Activated T-helper 2 cell treated with anti-CD3 and anti-CD28 coated beads, Interferon-gamma antibody, Interleukin-2, Interleukin-4, amounts not matched to agents 10 μg/mL and 5 μg/mL and 100 μg/mL, durations not matched to agents 14 hours and 24 hours and 36 hours (primary cell): ENCODE measurements at regions of chr10 and their contacts with region 1.

Region 1: DNA sequence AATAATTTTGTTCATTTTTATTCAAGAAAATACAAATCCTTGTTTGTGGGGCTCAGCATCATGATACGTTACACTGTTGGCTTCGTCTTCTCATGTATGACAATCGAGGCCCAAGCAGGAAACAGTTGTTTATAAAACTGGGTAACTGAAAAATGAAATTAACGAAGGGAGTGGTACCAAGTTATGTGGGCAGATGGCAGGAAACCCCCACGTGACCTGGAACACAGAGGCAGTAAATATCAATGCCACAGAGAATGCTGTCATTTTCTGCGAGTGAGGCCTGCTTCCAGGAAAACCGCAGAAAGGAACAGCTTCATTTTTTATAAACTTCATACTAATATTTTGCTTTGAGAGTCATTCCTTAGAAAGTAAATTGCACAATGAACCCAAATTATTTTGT is 201.0 kb upstream of the ADARB2 start:
- DNase-seq: peak; percentile 49
- H3K4me3 Mint-ChIP-seq: no peak overlapping the region
- H3K27ac Mint-ChIP-seq: peak overlapping the region; percentile 97
- H3K4me1 Mint-ChIP-seq: peaks cover 20% of the 10 kb centered on the region
- H3K27me3 Mint-ChIP-seq: no peaks in the 10 kb centered on the region

Region 2: GRCh38 chr10:1920127-1920526 is 18.2 kb before region 1 on chr10:
- intact Hi-C with region 1: loop called (anchors 1 kb)
- DNase-seq: no peak
- H3K4me3 Mint-ChIP-seq: no peak overlapping the region
- H3K27ac Mint-ChIP-seq: no peak overlapping the region
- H3K4me1 Mint-ChIP-seq: peaks cover 6% of the 10 kb centered on the region
- H3K27me3 Mint-ChIP-seq: no peaks in the 10 kb centered on the region

Region 3: DNA sequence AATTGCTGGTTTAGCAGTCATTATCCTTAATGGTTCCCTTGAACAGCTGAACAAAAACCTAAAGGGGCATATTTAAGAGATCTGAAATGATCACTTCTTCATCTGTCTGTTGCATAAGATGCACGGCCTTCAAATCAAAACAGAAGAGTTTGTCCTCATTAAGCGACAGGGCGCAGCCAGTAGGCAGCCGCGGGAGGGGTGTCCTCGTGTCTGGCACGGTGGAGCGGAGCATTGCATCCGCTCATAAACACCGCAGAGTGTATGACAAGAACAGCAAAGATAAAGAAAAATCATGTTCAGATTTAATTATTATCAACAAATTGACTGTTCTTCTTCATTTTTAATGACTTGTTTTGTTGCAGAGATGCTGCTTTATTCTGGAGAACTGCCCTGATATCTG is 54.6 kb after region 1 on chr10:
- intact Hi-C with region 1: no loop called
- DNase-seq: no peak
- H3K4me3 Mint-ChIP-seq: no peak overlapping the region
- H3K27ac Mint-ChIP-seq: no peak overlapping the region
- H3K4me1 Mint-ChIP-seq: no peaks in the 10 kb centered on the region
- H3K27me3 Mint-ChIP-seq: no peaks in the 10 kb centered on the region

Region 4: GRCh38 chr10:2038036-2038435 is 99.7 kb after region 1 on chr10:
- intact Hi-C with region 1: loop called (anchors 5 kb)
- DNase-seq: no peak
- H3K4me3 Mint-ChIP-seq: no peak overlapping the region
- H3K27ac Mint-ChIP-seq: no peak overlapping the region
- H3K4me1 Mint-ChIP-seq: no peaks in the 10 kb centered on the region
- H3K27me3 Mint-ChIP-seq: no peaks in the 10 kb centered on the region